Endothelial cell of umbilical vein (primary cell): ENCODE measurements at regions of chr7 and their contacts with region 1.

Region 1: DNA sequence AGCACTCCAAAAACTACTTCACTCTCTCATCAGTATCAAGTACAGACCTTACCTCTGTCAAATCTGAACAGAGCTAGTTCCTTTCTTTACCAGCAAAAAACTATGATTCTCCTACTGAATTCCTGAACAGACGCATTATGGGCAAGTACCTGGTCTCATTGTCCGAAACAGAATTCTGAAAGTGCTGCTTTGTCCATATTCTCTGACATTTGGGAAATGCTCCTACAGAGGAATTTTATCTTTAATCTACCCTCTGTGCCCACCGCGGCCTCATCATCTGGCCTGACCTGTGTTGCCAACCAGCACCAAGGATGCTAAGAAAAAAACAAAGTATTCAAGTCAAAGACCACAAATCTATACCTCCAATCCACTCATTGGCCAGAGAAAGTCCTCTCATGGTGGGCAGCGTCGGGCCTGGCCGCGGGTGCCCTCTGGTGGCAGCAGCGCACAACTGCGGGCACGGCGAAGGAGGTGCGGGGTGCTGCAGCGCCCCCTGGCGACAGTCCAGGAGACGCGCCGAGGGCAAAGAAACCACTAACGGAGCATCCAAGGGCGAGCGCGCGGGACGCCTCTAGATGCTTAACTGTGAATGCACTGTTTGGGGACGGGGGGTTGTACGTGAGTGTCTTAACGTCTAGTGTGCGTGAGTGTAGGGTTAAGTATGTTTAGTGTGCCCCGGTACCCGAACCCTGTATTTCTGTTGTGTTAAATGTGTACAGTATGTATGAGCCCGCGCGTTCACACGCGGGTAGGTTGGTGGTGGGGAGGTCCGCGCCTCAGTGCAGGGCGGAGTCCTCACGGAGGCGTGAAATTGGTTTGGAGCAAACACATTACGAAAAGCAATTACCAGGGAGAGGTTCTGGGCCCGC is 5.0 kb upstream of the GBX1 start:
- DNase-seq: peak; percentile 76
- H3K4me3 ChIP-seq: no peak overlapping the region
- H3K27ac ChIP-seq: no peak overlapping the region
- H3K4me1 ChIP-seq: peaks cover 3% of the 10 kb centered on the region
- H3K27me3 ChIP-seq: peaks cover 21 to 26% of the 10 kb centered on the region in 2 experiments
- CTCF ChIP-seq: peak; percentile 100
- POLR2A ChIP-seq: no peak

Region 2: DNA sequence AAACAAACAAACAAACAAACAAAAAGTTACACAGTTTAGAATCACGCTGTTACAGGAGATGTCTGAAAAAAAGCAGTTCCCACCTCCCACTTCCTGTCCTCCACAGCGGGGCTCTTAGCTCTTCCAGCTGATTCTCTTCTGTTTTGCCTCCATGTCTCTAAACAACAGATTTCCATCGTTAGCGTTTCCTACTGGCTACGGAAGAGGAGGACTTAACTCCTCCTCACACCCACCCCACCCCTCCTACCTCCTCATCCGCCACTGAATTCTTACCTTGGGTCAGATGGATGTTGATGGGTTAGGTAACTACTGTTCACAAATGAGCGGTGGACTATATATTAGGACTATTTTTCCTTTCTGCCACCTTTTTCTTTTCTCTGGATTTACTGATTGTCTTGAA is 132.3 kb after region 1 on chr7:
- CTCF ChIA-PET with region 1: no interaction called
- POLR2A ChIA-PET with region 1: no interaction called
- dilution Hi-C with region 1: no loop called
- intact Hi-C with region 1: loop called (anchors 5 kb)
- DNase-seq: no peak
- H3K4me3 ChIP-seq: peak overlapping the region in 1 of 3 experiments; percentile 20
- H3K27ac ChIP-seq: no peak overlapping the region
- H3K4me1 ChIP-seq: peaks cover 3% of the 10 kb centered on the region
- H3K27me3 ChIP-seq: peaks cover 10 to 17% of the 10 kb centered on the region in 2 experiments
- CTCF ChIP-seq: no peak
- POLR2A ChIP-seq: no peak

Region 3: GRCh38 chr7:151341357-151342101 is 169.0 kb after region 1 on chr7 and contains the start of gene NUB1:
- CTCF ChIA-PET with region 1: no interaction called
- POLR2A ChIA-PET with region 1: no interaction called
- dilution Hi-C with region 1: no loop called
- intact Hi-C with region 1: no loop called
- DNase-seq: peak; percentile 90
- H3K4me3 ChIP-seq: peak within 1 kb of the TSS; percentile 97 to 100 (median 100)
- H3K27ac ChIP-seq: peak within 1 kb of the TSS; percentile 53
- H3K4me1 ChIP-seq: peaks cover 15% of the 10 kb centered on the region
- H3K27me3 ChIP-seq: peaks cover 8 to 14% of the 10 kb centered on the region in 2 experiments
- CTCF ChIP-seq: no peak
- POLR2A ChIP-seq: no peak
- total RNA-seq, gene NUB1: 41.4 and 46.2 TPM in 2 replicates

Region 4: DNA sequence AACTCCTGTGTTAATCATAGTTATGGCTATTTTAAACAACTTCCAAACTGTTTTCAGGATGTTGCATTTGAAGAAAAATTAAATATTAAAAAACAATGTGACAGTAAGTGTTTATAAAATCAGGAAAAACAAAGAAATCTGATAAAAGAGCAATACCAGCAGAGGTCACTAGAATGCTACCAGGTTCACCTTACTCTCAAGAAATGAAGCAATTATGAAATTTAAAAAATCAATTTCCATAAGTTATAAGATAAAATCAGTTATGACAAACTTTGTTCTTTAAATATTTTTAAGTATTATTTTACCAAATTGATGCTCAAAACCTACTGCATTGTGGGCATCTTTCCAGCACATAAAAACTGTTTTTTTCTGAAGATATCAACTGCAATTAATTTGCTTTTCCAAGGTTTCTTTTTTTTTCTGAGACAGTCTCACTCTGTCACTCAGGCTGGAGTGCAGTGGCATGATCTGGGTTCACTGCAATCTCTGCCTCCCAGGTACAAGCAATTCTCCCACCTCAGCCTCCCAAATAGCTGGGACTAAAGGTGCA is 397.9 kb after region 1 on chr7:
- CTCF ChIA-PET with region 1: no interaction called
- POLR2A ChIA-PET with region 1: no interaction called
- dilution Hi-C with region 1: no loop called
- intact Hi-C with region 1: no loop called
- DNase-seq: peak; percentile 61
- H3K4me3 ChIP-seq: no peak overlapping the region
- H3K27ac ChIP-seq: no peak overlapping the region
- H3K4me1 ChIP-seq: no peaks in the 10 kb centered on the region
- H3K27me3 ChIP-seq: no peaks in the 10 kb centered on the region
- CTCF ChIP-seq: peak; percentile 37
- POLR2A ChIP-seq: no peak

Region 5: GRCh38 chr7:151736403-151736909 is 563.9 kb after region 1 on chr7:
- CTCF ChIA-PET with region 1: no interaction called
- POLR2A ChIA-PET with region 1: no interaction called
- dilution Hi-C with region 1: no loop called
- intact Hi-C with region 1: loop called (anchors 1 kb)
- DNase-seq: peak; percentile 92
- H3K4me3 ChIP-seq: peak overlapping the region in 2 of 3 experiments; percentile 32 to 35
- H3K27ac ChIP-seq: peak overlapping the region; percentile 75
- H3K4me1 ChIP-seq: peaks cover 15% of the 10 kb centered on the region
- H3K27me3 ChIP-seq: no peaks in the 10 kb centered on the region
- CTCF ChIP-seq: peak in 1 of 2 donors; percentile 23
- POLR2A ChIP-seq: peak; percentile 67